ENCODE measurements at regions of chr12 and their contacts with region 1.

Region 1: DNA sequence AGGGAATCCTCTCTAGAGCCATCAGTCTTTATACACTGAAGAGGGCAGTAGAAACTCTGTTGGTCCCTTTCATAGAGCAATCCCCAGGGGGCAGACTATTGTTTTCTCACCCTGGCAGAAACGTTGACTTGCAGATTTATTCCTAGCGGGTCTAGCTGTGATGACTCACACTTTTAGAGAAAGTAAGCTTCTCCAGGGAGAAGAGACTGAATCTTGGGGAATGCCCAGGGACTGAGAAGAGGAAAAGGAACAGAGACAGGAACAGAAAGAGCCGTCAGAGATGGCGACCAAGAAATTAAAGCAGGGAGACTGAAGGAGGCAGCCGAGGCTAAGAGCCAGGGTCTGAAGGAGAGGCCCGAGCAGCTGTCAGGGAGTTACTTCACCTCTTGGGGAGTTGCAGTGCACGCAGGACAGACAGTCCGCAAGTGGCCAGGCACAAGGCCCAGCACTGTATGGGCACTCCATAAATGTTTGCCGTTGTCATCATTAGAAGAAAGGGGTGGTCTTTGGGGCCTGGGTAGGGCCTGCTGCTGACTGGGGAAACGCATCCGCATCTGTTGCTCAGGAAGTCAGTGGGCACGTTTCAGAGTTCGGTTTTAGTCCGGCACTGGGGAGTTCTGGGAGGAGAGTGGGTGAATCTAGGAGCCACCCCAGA is 13.0 kb downstream of the PLEKHG6 start:
- DNase-seq: peak; percentile 92
- H3K4me3 Mint-ChIP-seq: peak overlapping the region; percentile 3
- H3K27ac Mint-ChIP-seq: peak overlapping the region; percentile 68
- H3K4me1 Mint-ChIP-seq: peaks cover 38% of the 10 kb centered on the region
- H3K27me3 Mint-ChIP-seq: no peaks in the 10 kb centered on the region
- CTCF ChIP-seq: peak; percentile 40

Region 2: GRCh38 chr12:6171409-6172015 is 152.0 kb before region 1 on chr12:
- CTCF ChIA-PET with region 1: no interaction called
- POLR2A ChIA-PET with region 1: no interaction called
- intact Hi-C with region 1: no loop called
- DNase-seq: no peak
- H3K4me3 Mint-ChIP-seq: no peak overlapping the region
- H3K27ac Mint-ChIP-seq: no peak overlapping the region
- H3K4me1 Mint-ChIP-seq: peaks cover 14% of the 10 kb centered on the region
- H3K27me3 Mint-ChIP-seq: no peaks in the 10 kb centered on the region
- CTCF ChIP-seq: no peak

Region 3: GRCh38 chr12:6230321-6231110 is 93.0 kb before region 1 on chr12:
- CTCF ChIA-PET with region 1: no interaction called
- POLR2A ChIA-PET with region 1: no interaction called
- intact Hi-C with region 1: no loop called
- DNase-seq: peak; percentile 65
- H3K4me3 Mint-ChIP-seq: peak overlapping the region; percentile 68
- H3K27ac Mint-ChIP-seq: peak overlapping the region; percentile 98
- H3K4me1 Mint-ChIP-seq: peaks cover 44% of the 10 kb centered on the region
- H3K27me3 Mint-ChIP-seq: no peaks in the 10 kb centered on the region
- CTCF ChIP-seq: no peak

Region 4: DNA sequence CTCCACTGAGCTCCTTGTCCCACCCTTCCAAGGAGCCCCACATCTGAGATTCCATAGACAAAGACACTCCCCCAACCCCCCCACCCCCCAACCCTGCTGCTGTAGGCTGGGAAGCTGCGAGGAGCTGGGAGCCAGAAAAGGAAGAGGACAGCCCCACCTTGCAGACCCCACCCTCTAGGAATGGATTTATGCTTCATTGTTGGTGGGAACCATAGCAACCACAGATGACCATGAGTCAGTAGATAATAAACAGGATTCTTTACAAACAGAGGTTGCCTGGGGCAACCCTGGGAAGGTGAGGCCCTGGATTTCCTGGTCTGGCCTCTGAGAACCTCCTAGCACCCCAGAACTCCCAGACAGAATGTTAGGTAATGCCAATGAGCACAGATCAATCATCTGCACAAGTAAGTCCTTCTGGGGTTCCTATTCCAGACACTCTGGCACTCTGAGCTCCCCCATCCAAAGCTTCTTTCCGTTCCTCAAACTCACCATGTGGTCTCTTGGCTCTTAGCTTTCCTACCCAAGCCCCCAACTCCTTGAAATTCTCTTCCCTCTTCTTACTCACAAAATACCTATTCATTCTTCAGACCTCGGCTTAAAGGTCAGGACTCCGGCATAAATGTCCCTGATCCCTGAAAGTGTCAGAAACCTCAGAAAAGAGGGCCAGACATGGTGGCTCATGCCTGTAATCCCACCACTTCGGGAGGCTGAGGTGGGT is 28.2 kb before region 1 on chr12:
- CTCF ChIA-PET with region 1: interaction called, 6 read pairs
- POLR2A ChIA-PET with region 1: interaction called, 11 read pairs
- intact Hi-C with region 1: loop called (anchors 2 kb)
- DNase-seq: peak; percentile 88
- H3K4me3 Mint-ChIP-seq: no peak overlapping the region
- H3K27ac Mint-ChIP-seq: peak overlapping the region; percentile 80
- H3K4me1 Mint-ChIP-seq: peaks cover 18% of the 10 kb centered on the region
- H3K27me3 Mint-ChIP-seq: no peaks in the 10 kb centered on the region
- CTCF ChIP-seq: no peak

Region 5: GRCh38 chr12:6312529-6313325 is 10.7 kb before region 1 on chr12:
- CTCF ChIA-PET with region 1: interaction called, 8 read pairs
- POLR2A ChIA-PET with region 1: interaction called, 27 read pairs
- intact Hi-C with region 1: no loop called
- DNase-seq: peak; percentile 84
- H3K4me3 Mint-ChIP-seq: peak overlapping the region; percentile 24
- H3K27ac Mint-ChIP-seq: peak overlapping the region; percentile 54
- H3K4me1 Mint-ChIP-seq: peaks cover 14% of the 10 kb centered on the region
- H3K27me3 Mint-ChIP-seq: no peaks in the 10 kb centered on the region
- CTCF ChIP-seq: no peak

Region 6: DNA sequence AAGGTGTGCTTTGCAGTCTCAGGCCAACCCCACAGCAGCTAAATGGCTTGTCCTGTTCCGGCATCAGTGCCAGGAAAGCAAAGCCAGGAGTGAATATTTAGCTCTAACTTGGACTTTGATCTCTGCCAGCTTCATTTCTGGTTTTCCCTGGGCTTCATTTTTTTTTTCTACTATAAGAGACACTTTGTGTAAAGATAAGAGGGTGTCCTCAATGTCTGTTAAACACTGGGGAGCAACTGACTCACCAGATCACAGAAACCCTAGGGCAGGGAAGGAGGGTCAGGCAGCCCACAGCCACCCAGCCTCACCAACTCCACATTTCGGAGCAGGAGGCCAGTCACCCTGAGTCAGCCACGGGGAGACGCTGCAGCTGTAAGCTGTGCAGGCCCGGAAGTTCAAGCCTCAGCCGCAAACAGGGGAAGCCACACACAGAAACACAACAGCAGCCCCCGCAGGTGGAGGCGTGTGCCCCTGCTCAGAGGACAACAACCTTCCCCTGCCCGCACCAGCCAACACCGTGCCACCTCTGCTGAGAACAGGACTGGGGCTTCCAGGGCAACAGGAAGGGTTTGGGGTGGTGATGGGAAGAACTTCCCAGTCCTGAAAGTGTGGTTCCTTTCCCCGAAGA is 12.1 kb after region 1 on chr12:
- CTCF ChIA-PET with region 1: interaction called, 19 read pairs
- POLR2A ChIA-PET with region 1: interaction called, 26 read pairs
- intact Hi-C with region 1: no loop called
- DNase-seq: peak; percentile 85
- H3K4me3 Mint-ChIP-seq: no peak overlapping the region
- H3K27ac Mint-ChIP-seq: no peak overlapping the region
- H3K4me1 Mint-ChIP-seq: peaks cover 24% of the 10 kb centered on the region
- H3K27me3 Mint-ChIP-seq: no peaks in the 10 kb centered on the region
- CTCF ChIP-seq: peak; percentile 44

Region 7: DNA sequence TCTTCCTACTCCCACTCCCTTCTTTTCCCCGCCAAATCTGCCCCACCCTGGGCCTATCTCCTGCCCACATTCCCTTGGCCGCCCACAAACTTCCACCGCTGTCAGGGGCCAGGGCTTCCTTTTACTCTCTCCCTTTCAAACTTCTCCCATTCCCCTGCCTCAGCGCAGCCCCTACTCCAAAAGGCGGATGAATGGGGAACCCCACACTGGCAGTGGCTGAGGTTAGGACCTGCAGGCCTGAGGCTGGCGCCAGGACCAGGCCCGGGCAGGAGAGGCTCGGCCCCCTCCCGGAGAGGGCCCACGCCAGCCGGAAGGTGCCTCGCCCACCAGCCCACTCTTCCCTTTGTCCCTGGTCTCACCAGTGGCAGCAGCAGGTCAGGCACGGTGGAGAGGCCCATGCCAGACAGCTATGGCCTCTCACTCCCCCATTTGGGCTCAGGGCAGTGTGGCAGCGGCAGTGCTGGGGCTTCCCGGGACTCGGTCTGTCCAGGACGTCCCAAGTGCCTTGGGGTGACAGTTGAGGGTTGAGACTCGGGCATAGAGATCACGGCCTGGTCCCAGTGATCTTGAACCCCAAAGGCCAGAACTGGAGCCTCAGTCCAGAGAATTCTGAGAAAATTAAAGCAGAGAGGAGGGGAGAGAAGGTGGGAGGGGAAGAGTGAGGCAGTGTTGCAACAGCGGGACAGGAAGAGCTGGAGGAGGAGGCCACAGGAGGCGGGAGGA is 18.1 kb after region 1 on chr12 and contains the start of gene TNFRSF1A:
- CTCF ChIA-PET with region 1: interaction called, 19 read pairs
- POLR2A ChIA-PET with region 1: interaction called, 26 read pairs
- intact Hi-C with region 1: no loop called
- DNase-seq: peak; percentile 89
- H3K4me3 Mint-ChIP-seq: no peak within 1 kb of the TSS
- H3K27ac Mint-ChIP-seq: no peak within 1 kb of the TSS
- H3K4me1 Mint-ChIP-seq: peaks cover 37% of the 10 kb centered on the region
- H3K27me3 Mint-ChIP-seq: no peaks in the 10 kb centered on the region
- CTCF ChIP-seq: no peak
- total RNA-seq, gene TNFRSF1A: 103 and 110 TPM in 2 replicates

Region 8: GRCh38 chr12:6376079-6376869 is 52.8 kb after region 1 on chr12:
- CTCF ChIA-PET with region 1: interaction called, 10 read pairs
- POLR2A ChIA-PET with region 1: interaction called, 10 read pairs
- intact Hi-C with region 1: loop called (anchors 2 kb)
- DNase-seq: peak; percentile 97
- H3K4me3 Mint-ChIP-seq: peak overlapping the region; percentile 89
- H3K27ac Mint-ChIP-seq: peak overlapping the region; percentile 97
- H3K4me1 Mint-ChIP-seq: peaks cover 56% of the 10 kb centered on the region
- H3K27me3 Mint-ChIP-seq: no peaks in the 10 kb centered on the region
- CTCF ChIP-seq: no peak

Region 9: DNA sequence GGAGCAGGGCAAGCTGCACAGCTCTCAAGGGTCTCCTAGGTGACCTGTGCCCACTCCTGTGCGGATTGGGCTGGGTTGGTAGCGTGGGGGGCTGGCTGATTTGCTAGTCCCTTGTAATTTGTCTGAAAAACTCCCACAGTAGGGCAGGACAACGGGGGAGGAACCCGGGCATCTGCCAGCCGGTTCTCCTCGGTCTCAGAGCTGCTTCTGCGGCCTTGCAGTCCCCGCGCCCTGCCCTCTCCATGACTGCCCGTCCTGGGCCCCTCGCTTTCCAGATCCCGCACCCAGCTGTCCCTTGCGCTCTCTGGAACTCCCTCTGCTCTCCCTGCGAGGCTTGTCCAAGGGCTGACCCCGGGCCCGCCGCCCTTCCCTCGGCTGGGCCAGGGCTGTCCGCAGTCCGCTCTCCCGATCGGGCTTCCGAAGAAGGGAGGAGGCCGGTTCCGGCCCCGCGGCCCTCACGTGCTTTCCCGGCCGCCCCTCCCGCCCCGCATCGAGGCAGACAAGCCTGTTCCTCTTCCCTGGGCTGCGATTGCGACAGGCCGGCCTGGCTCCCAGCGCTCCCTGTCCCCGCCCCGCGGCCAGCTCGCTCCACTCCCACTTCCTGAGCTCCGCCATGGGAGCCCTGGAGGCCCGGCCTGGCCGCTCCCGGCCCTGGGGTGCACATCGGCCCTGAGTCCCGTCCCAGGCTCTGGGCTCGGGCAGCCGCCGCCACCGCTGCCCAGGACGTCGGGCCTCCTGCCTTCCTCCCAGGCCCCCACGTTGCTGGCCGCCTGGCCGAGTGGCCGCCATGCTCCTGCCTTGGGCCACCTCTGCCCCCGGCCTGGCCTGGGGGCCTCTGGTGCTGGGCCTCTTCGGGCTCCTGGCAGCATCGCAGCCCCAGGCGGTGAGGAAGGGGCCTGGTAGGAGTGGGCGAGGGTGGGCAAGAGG is 60.4 kb after region 1 on chr12 and contains the start of gene LTBR:
- CTCF ChIA-PET with region 1: interaction called, 4 read pairs
- POLR2A ChIA-PET with region 1: interaction called, 3 read pairs
- intact Hi-C with region 1: loop called (anchors 2 kb)
- DNase-seq: peak; percentile 96
- H3K4me3 Mint-ChIP-seq: peak within 1 kb of the TSS; percentile 94
- H3K27ac Mint-ChIP-seq: peak within 1 kb of the TSS; percentile 96
- H3K4me1 Mint-ChIP-seq: peaks cover 35% of the 10 kb centered on the region
- H3K27me3 Mint-ChIP-seq: no peaks in the 10 kb centered on the region
- CTCF ChIP-seq: no peak
- total RNA-seq, gene LTBR: 158 and 169 TPM in 2 replicates

Region 10: GRCh38 chr12:6688999-6689882 is 365.8 kb after region 1 on chr12 and contains the start of gene ZNF384:
- CTCF ChIA-PET with region 1: no interaction called
- POLR2A ChIA-PET with region 1: no interaction called
- intact Hi-C with region 1: no loop called
- DNase-seq: peak; percentile 99
- H3K4me3 Mint-ChIP-seq: peak within 1 kb of the TSS; percentile 98
- H3K27ac Mint-ChIP-seq: peak within 1 kb of the TSS; percentile 99
- H3K4me1 Mint-ChIP-seq: peaks cover 22% of the 10 kb centered on the region
- H3K27me3 Mint-ChIP-seq: peaks cover 3% of the 10 kb centered on the region
- CTCF ChIP-seq: no peak
- total RNA-seq, gene ZNF384: 62.8 and 70.8 TPM in 2 replicates

Measured in MCF 10A (cell line).